Adrenal gland (tissue), 19 donors: ENCODE measurements at regions of chr1 and their contacts with region 1.

Region 1: GRCh38 chr1:206489980-206490770 is 17.2 kb upstream of the RASSF5 start:
- DNase-seq: peak; percentile 80 to 93 (median 88)
- H3K4me3 ChIP-seq: no peak overlapping the region
- H3K27ac ChIP-seq: peak overlapping the region in 2 of 5 donors; percentile 2 to 44
- H3K4me1 ChIP-seq: peaks cover 6 to 23% of the 10 kb centered on the region in 2 donors
- H3K27me3 ChIP-seq: no peaks in the 10 kb centered on the region
- CTCF ChIP-seq: peak; percentile 90 to 97 (median 96)
- POLR2A ChIP-seq: no peak

Region 2: DNA sequence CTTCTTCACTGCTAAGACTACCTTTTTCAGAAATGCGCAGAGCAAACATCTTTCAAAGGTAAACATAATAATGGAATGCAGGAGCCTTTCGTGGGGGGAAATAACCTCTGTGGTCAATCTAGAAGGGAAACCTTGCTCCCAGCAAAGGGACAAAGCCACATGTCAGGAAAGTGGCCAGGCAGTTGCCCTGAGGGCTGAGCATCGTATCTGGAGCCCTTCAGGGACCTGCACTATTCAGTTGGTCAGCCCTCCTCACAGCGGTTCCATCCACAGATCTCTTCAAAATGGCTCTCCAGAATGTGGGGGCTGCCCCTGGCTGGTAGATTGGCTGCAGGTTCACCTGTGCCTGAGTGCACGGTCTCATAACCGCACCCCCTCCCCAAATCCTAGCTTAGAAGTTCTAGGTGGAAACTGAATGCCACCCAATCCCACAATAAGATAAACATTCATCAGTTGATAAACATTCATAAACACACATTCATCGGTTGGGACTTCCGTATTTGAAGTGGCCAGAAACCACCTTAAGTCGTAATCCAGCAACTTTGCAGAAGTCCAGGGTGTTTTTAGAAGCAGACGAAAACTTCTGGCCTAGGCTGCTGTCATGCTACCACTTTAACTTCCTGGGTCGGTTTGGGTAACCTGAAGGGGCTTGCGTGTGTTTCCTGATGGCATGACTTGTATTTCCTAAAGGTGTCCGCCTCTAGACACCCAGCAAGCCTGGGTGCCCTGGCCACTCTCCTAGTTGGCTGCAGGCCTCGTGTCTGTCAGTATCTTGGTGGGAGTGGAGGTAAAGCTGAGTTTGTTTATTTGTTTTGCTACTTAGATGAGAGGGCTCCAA is 67.7 kb after region 1 on chr1:
- intact Hi-C with region 1: no loop called
- DNase-seq: no peak
- H3K4me3 ChIP-seq: peak overlapping the region in 2 of 4 donors; percentile 20 to 64
- H3K27ac ChIP-seq: peak overlapping the region; percentile 52 to 90 (median 67)
- H3K4me1 ChIP-seq: peaks cover 52 to 77% of the 10 kb centered on the region in 2 donors
- H3K27me3 ChIP-seq: no peaks in the 10 kb centered on the region
- CTCF ChIP-seq: no peak
- POLR2A ChIP-seq: no peak

Region 3: GRCh38 chr1:206583707-206584648 is 93.8 kb after region 1 on chr1:
- intact Hi-C with region 1: loop called (anchors 2 to 5 kb)
- DNase-seq: peak; percentile 74 to 92 (median 85)
- H3K4me3 ChIP-seq: no peak overlapping the region
- H3K27ac ChIP-seq: no peak overlapping the region
- H3K4me1 ChIP-seq: peaks cover 8 to 41% of the 10 kb centered on the region in 2 donors
- H3K27me3 ChIP-seq: no peaks in the 10 kb centered on the region
- CTCF ChIP-seq: peak; percentile 87 to 93 (median 91)
- POLR2A ChIP-seq: no peak

Region 4: GRCh38 chr1:206589206-206589605 is 99.0 kb after region 1 on chr1:
- intact Hi-C with region 1: loop called (anchors 2 to 5 kb)
- DNase-seq: peak; percentile 56 to 91 (median 83)
- H3K4me3 ChIP-seq: no peak overlapping the region
- H3K27ac ChIP-seq: peak overlapping the region; percentile 52 to 79 (median 59)
- H3K4me1 ChIP-seq: peaks cover 36 to 50% of the 10 kb centered on the region in 2 donors
- H3K27me3 ChIP-seq: no peaks in the 10 kb centered on the region
- CTCF ChIP-seq: no peak
- POLR2A ChIP-seq: peak in 1 of 2 donors; percentile 26

Region 5: DNA sequence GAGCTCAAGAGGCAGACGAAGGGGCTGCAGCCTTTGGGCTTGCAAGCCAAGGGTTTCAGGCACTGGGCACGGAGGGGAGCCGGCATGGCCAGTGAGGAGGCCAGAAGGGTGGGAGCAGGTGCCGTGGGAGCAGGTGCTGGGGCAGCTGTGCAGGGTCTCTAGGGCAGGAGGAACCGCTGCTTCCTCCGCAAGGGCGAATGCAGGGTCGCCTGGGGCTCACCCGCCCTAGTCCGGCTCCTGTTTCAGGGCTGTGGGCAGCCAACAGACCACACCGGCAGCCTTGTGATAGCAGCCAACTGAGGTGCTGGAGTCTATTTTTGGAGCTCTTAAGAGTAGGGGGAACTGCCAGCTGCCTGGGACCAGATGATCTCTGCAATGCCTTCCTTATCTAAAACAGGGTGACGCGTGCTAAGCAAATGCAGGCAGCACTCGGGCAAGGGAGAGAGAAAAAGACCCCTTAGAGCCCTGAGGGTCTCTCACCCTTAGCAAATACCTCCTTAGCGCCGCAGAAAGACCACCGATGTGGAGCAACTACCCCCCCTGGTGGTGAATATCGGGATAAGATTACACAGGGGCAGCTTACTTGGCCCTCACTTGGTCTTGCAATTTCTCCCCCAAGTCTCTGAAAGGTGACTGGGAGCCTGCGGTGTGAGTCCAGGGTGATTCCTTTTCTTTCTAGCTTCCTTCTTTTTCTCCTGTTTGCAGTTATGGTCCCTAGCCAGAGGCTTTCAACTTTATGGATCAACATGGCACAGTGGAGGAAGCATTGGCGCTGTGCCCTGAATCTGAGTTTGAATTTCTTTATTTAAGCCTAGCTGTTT is 173.9 kb after region 1 on chr1:
- intact Hi-C with region 1: loop called (anchors 10 kb)
- DNase-seq: peak; percentile 47 to 79 (median 71)
- H3K4me3 ChIP-seq: no peak overlapping the region
- H3K27ac ChIP-seq: no peak overlapping the region
- H3K4me1 ChIP-seq: peaks cover 0 to 11% of the 10 kb centered on the region in 2 donors
- H3K27me3 ChIP-seq: no peaks in the 10 kb centered on the region
- CTCF ChIP-seq: peak; percentile 80 to 92 (median 88)
- POLR2A ChIP-seq: no peak

Region 6: GRCh38 chr1:206912445-206913095 is 422.4 kb after region 1 on chr1:
- intact Hi-C with region 1: loop called in 1 of 2 experiments (anchors 10 kb)
- DNase-seq: peak; percentile 69 to 94 (median 79)
- H3K4me3 ChIP-seq: no peak overlapping the region
- H3K27ac ChIP-seq: no peak overlapping the region
- H3K4me1 ChIP-seq: peaks cover 9 to 15% of the 10 kb centered on the region in 2 donors
- H3K27me3 ChIP-seq: peaks cover 10% of the 10 kb centered on the region
- CTCF ChIP-seq: peak; percentile 77 to 92 (median 88)
- POLR2A ChIP-seq: no peak